ENCODE measurements at regions of chr15 and their contacts with region 1.

Region 1: DNA sequence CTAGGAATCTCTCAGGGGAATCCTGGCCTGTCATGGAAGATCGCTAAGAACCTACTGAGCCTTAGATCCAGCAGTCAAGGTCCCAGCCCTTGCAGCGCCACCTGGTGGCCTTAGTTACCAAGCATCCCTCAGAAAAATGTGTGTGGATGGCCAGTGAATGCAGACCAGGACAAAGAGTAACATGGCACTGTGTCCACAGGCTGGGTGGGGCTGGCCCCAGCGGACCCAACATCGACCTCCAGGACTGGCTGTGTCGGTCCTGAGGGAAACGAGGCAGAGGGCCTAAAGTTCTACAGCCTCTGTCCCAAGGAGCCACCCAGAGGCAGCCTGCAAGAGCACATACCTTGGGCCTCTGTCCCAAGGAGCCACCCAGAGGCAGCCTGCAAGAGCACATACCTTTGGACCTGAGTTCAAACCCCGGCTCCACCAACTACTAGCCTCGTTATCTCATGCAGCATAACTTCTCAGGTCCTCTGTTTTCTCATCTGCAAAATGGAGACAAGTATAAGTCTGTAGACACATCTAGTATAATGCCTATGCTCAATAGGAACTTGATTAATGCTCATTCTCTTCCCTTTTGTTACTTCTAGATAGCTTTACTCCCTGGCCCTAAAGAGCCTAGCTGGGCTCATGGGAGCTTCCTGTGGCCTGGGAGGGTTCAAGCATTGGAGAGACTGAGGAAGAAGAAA is 57.5 kb upstream of the HERC1 start:
- DNase-seq: peak; percentile 73
- ATAC-seq: peak; percentile 93
- H3K4me3 ChIP-seq: no peak overlapping the region; a peak in 1 of 6 replicates
- H3K27ac ChIP-seq: no peak overlapping the region
- H3K4me1 ChIP-seq: peaks cover 6% of the 10 kb centered on the region
- H3K27me3 ChIP-seq: peaks cover 0 to 2% of the 10 kb centered on the region in 2 experiments; a peak in 1 of 5 replicates
- CTCF ChIP-seq: peak; percentile 93
- EP300 ChIP-seq: 0 out of 4 replicates have a peak, but pooled peaks of 1 of the 2 experiments have one; percentile 6
- POLR2A ChIP-seq: no peak
- RAD21 ChIP-seq: peak; percentile 82

Region 2: GRCh38 chr15:63449731-63450130 is 441.5 kb before region 1 on chr15:
- CTCF ChIA-PET with region 1: no interaction called
- POLR2A ChIA-PET with region 1: no interaction called
- in situ Hi-C with region 1: no loop called
- intact Hi-C with region 1: no loop called
- DNase-seq: no peak
- ATAC-seq: peak; percentile 75
- H3K4me3 ChIP-seq: peak overlapping the region; percentile 12 to 48 (median 32); a peak in 4 of 6 replicates
- H3K27ac ChIP-seq: no peak overlapping the region
- H3K4me1 ChIP-seq: peaks cover 23% of the 10 kb centered on the region
- H3K27me3 ChIP-seq: no peaks in the 10 kb centered on the region; a peak in 3 of 5 replicates
- CTCF ChIP-seq: no peak
- EP300 ChIP-seq: no peak
- POLR2A ChIP-seq: no peak
- RAD21 ChIP-seq: no peak

Region 3: DNA sequence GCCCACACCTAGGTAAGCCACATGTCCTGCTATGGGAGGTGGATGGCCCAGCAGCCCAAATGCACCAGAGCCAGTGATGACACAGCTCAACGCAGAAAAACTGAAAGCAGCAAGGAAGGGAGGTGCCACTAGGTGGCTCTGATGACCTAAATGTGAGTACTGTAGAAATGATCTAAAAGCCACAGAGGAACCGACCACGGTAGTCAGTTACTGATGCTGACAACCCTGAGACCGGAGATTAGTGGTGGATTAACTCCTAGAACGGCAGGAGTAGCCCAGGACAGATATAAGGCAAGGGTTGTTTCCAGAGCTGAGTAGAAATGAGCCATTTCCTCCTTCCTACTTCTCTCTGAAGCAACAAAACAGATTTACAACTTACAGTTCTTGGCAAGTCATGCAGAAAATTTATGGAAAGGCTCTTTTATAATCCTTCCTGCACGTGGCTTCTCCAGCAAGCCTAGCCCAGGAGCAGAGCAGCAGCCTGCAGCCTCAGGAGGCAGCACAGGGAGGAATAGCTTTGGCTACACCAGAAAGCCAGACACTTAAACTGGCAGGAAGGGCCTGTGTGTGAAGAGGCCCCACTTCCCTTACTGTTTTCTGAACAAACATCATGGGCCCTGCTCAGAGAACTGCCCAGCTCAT is 280.9 kb before region 1 on chr15:
- CTCF ChIA-PET with region 1: interaction called, 5 read pairs
- POLR2A ChIA-PET with region 1: no interaction called
- in situ Hi-C with region 1: loop called (anchors 5 kb)
- intact Hi-C with region 1: loop called (anchors 1 kb)
- DNase-seq: peak; percentile 77
- ATAC-seq: peak; percentile 94
- H3K4me3 ChIP-seq: no peak overlapping the region
- H3K27ac ChIP-seq: peak overlapping the region; percentile 27
- H3K4me1 ChIP-seq: peaks cover 21% of the 10 kb centered on the region
- H3K27me3 ChIP-seq: no peaks in the 10 kb centered on the region
- CTCF ChIP-seq: peak; percentile 90
- EP300 ChIP-seq: no peak
- POLR2A ChIP-seq: no peak
- RAD21 ChIP-seq: peak; percentile 60

Region 4: GRCh38 chr15:63752075-63752684 is 139.0 kb before region 1 on chr15:
- CTCF ChIA-PET with region 1: interaction called, 32 read pairs
- POLR2A ChIA-PET with region 1: no interaction called
- in situ Hi-C with region 1: loop called (anchors 5 kb)
- intact Hi-C with region 1: loop called (anchors 1 kb)
- DNase-seq: peak; percentile 61
- ATAC-seq: peak; percentile 69
- H3K4me3 ChIP-seq: no peak overlapping the region
- H3K27ac ChIP-seq: no peak overlapping the region
- H3K4me1 ChIP-seq: no peaks in the 10 kb centered on the region
- H3K27me3 ChIP-seq: no peaks in the 10 kb centered on the region
- CTCF ChIP-seq: peak; percentile 74
- EP300 ChIP-seq: no peak
- POLR2A ChIP-seq: no peak
- RAD21 ChIP-seq: peak; percentile 63